Activated CD4-positive, alpha-beta T cell treated with anti-CD3 and anti-CD28 coated beads for 36 hours (primary cell): ENCODE measurements at regions of chr3 and their contacts with region 1.

Region 1: GRCh38 chr3:81354119-81354518 is 407.3 kb downstream of the GBE1 start:
- DNase-seq: no peak
- ATAC-seq: no peak
- H3K4me3 Mint-ChIP-seq: no peak overlapping the region
- H3K27ac Mint-ChIP-seq: no peak overlapping the region
- H3K4me1 Mint-ChIP-seq: no peaks in the 10 kb centered on the region
- H3K27me3 Mint-ChIP-seq: no peaks in the 10 kb centered on the region

Region 2: DNA sequence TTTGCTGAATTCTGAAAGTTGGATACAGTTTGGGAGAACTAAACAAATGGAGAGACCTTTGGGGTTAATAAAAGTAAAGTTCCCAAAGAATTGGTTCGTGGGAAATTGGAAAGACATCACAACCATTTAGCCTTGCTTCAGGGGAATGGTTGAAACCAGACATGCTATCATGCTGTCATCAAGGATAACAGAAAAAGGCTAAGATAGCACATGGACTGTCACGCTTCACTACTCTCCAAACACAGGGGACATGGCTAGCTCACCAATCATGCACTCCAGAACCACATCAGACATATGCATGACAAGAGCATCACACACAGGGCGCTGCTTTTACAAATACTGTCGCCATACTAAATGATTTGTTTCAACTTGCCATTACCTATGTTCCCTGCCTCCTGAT is 914.6 kb before region 1 on chr3:
- CTCF ChIA-PET with region 1: no interaction called
- POLR2A ChIA-PET with region 1: interaction called, 14 read pairs
- intact Hi-C with region 1: no loop called
- DNase-seq: no peak
- ATAC-seq: no peak
- H3K4me3 Mint-ChIP-seq: no peak overlapping the region
- H3K27ac Mint-ChIP-seq: no peak overlapping the region
- H3K4me1 Mint-ChIP-seq: no peaks in the 10 kb centered on the region
- H3K27me3 Mint-ChIP-seq: no peaks in the 10 kb centered on the region

Region 3: DNA sequence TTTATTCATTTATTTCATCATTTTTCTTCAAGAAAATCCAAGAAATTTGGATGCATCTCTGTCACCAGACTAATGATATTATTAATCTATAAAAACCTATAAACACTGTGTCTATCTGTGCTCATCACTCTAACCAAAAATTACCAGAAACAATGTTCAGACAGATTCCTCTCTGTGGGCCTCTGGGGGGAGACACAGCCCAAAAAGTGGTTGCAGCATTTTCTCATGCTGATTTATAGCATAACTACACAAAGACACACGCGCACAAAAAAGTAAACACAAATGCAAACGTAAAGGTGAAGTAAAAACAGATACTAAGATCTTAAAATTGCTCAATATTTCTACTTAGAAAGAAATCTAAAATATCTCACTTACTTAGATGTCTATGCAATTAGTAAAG is 568.6 kb before region 1 on chr3:
- CTCF ChIA-PET with region 1: no interaction called
- POLR2A ChIA-PET with region 1: no interaction called
- intact Hi-C with region 1: no loop called
- DNase-seq: no peak
- ATAC-seq: no peak
- H3K4me3 Mint-ChIP-seq: no peak overlapping the region
- H3K27ac Mint-ChIP-seq: no peak overlapping the region
- H3K4me1 Mint-ChIP-seq: no peaks in the 10 kb centered on the region
- H3K27me3 Mint-ChIP-seq: no peaks in the 10 kb centered on the region